ENCODE measurements at regions of chr4 and their contacts with region 1.

Region 1: DNA sequence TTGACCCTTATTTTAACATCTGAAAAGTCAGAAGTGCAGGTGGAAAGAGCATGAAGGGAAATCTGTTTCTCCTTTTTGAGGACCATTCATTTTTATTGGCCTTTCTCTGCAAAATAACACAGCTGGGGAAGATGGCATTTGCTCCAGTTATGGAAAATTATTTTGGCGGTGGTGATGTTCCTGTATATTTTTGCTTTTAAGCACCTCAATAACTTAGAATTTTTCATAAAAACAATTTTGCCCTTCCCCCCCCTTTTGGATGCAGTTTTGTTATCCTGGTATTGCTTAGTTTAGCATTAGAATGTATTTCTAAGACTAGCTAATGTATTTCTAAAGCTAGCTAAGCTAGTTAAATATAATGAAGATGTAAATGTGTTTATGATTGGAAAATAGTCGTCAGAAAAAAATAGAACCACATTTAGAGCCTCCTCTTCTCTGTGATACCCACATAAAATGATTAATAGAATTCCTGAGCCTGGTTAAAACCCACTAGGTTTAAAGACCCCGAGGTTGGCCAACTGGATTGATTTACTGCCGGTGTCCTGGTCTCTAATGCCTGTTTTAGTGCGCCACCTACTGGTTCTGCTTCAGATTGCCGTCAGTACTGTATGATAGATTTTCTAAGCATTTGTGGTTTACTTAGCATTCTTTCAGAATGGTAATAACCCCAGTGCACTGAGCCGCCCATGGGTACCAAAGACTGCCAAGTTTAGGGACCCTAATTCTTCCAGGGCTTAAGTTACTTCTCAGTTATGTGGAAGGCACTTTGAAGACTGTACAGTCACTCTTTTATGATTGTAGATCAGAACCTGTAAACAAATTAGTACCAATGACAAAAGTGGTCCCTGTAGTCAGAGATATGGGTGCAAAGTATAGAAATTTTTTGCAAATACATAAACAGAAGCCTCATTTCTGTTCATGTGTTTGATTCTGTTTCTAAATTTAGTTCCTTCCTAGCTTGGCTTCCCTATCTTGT is 11.4 kb downstream of the KLF3 start:
- DNase-seq: peak; percentile 95
- H3K4me3 Mint-ChIP-seq: peak overlapping the region; percentile 71
- H3K27ac Mint-ChIP-seq: peak overlapping the region; percentile 82
- H3K4me1 Mint-ChIP-seq: peaks cover 85% of the 10 kb centered on the region
- H3K27me3 Mint-ChIP-seq: no peaks in the 10 kb centered on the region

Region 2: DNA sequence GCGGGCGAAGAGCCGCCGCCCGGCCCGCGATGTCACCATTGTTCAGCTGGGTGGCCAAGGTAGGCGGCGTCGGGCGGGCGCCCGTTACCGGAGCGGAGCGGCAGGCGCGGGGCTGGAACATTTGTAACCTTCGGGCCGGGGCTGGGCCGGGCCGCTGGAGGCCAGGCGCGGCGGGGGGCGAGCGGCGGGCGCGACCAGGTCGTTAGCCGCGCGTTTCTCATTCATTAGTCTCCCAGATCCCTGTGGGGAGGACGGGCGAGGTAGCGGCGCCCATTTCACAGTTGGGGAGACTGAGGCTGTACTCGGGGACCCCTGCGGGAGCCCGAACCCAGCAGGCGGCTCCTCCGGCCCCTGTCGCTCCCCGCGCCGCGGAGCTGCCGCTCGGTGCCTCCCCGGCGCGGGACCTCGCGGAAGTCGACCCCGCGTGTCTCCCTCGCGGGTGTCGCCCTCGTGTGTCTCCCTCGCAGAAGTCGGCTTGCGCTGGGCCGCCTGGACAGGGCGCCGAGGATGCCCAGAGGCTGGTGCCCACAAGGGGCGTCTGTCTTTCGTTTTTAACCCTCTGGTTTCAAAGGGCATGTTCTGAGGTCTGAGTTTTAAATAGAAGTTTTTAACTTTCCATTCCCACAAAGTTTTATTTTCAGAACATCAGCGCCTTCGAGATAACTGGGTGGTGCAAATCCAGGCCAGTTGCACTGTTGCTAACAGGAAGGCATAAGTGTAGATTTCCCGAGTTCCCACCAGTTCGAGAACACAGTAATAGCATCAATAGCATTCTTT is 697.8 kb before region 1 on chr4:
- CTCF ChIA-PET with region 1: no interaction called
- intact Hi-C with region 1: loop called (anchors 5 kb)
- DNase-seq: peak; percentile 83
- H3K4me3 Mint-ChIP-seq: peak overlapping the region; percentile 77
- H3K27ac Mint-ChIP-seq: peak overlapping the region; percentile 26
- H3K4me1 Mint-ChIP-seq: peaks cover 27% of the 10 kb centered on the region
- H3K27me3 Mint-ChIP-seq: no peaks in the 10 kb centered on the region

Region 3: DNA sequence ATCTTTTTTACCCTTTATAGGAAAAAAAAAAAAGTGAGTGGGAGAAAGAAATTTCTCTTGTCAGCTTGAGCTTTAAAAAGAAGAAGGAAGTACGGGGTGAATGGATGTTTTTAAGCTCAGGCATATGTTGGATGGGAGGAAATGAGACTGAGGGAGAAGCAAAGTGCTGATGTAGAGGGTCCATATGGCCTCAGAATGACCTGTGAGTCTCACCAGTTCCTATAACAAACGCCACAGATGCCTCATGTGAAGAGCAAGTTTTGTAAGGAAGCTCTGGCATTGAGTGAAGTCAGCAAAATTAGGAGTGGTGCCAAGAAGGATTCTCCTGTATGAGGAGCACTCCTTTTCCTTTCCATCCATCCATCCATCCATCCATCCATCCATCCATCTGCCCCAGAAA is 500.6 kb before region 1 on chr4:
- CTCF ChIA-PET with region 1: interaction called, 101 read pairs
- intact Hi-C with region 1: loop called (anchors 1 kb)
- DNase-seq: no peak
- H3K4me3 Mint-ChIP-seq: no peak overlapping the region
- H3K27ac Mint-ChIP-seq: peak overlapping the region; percentile 14
- H3K4me1 Mint-ChIP-seq: peaks cover 42% of the 10 kb centered on the region
- H3K27me3 Mint-ChIP-seq: no peaks in the 10 kb centered on the region

Region 4: DNA sequence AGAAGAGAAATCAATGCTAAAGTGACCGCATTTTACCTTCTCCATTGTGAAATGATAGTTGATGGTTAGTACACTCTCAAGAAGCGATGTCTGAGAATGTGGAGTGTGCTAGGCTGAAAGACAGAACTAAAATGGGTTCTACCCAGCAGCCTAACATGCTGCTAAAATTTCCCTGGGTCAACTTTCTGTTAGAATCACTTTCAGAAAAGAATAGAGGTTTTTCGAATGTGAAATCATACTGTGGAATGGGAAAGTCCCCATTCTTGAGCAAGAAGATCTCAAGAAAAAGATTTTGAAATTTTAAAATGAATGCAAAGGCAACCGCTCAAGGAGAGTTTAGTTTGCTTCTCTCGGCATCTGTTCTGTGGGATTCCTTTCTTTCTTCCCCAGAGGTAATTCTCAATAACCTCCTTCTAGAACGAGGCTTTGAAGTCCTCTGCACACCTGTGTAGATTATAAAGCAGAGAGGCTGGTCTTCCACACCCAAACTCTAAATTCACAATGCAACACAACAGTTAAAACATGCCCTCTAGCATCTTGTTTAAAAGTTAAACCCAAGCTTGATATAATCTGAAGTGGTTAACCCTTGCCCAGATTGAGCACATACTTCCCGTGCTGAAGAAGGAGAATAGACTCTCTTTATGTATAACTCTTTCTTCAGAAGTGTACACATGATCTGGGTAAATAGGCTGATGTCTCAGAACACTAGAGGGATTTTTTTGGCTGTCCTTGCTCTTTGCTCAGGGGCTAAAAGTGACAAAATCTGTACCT is 220.2 kb before region 1 on chr4:
- CTCF ChIA-PET with region 1: no interaction called
- intact Hi-C with region 1: loop called (anchors 10 kb)
- DNase-seq: peak; percentile 11
- H3K4me3 Mint-ChIP-seq: no peak overlapping the region
- H3K27ac Mint-ChIP-seq: peak overlapping the region; percentile 82
- H3K4me1 Mint-ChIP-seq: peaks cover 52% of the 10 kb centered on the region
- H3K27me3 Mint-ChIP-seq: no peaks in the 10 kb centered on the region

Region 5: GRCh38 chr4:38687571-38688011 is 12.2 kb after region 1 on chr4:
- CTCF ChIA-PET with region 1: interaction called, 10 read pairs
- intact Hi-C with region 1: no loop called
- DNase-seq: peak; percentile 50
- H3K4me3 Mint-ChIP-seq: no peak overlapping the region
- H3K27ac Mint-ChIP-seq: peak overlapping the region; percentile 78
- H3K4me1 Mint-ChIP-seq: peaks cover 62% of the 10 kb centered on the region
- H3K27me3 Mint-ChIP-seq: no peaks in the 10 kb centered on the region

Region 6: GRCh38 chr4:38837849-38838248 is 162.4 kb after region 1 on chr4:
- CTCF ChIA-PET with region 1: no interaction called
- intact Hi-C with region 1: no loop called
- DNase-seq: no peak
- H3K4me3 Mint-ChIP-seq: no peak overlapping the region
- H3K27ac Mint-ChIP-seq: peak overlapping the region; percentile 43
- H3K4me1 Mint-ChIP-seq: peaks cover 23% of the 10 kb centered on the region
- H3K27me3 Mint-ChIP-seq: no peaks in the 10 kb centered on the region

Region 7: DNA sequence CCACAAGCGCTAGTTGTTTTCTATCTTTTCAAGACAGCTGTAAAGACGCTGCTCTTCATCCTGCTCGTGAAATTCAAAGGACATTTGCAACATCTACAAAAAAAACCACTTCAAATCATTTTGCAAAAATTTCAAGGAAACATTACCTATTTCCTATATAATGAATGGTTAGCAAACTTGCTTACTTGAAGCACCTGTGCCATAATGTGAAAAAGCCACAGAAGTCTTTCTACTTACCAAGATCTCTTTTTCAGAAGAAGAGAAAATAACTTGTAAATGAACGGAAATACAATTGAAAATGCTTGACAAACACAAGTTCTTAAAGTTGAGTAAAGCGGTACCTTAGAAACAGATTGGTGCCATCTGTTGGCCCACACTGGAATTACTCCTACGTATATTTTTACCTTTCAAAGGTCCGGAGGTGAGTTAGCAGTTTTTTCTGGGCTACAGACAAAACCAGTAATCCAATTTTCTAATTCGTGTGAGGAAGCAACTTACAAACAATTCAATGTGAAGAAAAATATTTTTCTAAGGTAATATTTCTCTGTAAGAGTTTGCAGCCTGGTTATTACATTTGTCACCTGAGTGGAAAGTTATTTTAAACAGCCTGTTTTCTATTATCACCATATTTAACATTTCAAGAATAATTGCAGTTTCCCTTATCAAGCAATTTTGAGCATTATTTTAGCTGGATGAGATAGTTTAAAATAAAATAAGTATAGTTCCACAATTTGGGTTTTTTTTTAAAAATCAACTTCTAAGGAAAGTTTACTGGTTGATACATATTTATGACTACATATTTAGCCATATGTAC is 181.3 kb after region 1 on chr4 and contains the start of gene TLR6:
- CTCF ChIA-PET with region 1: no interaction called
- intact Hi-C with region 1: loop called (anchors 5 kb)
- DNase-seq: peak; percentile 86
- H3K4me3 Mint-ChIP-seq: peak within 1 kb of the TSS; percentile 66
- H3K27ac Mint-ChIP-seq: peak within 1 kb of the TSS; percentile 84
- H3K4me1 Mint-ChIP-seq: peaks cover 35% of the 10 kb centered on the region
- H3K27me3 Mint-ChIP-seq: no peaks in the 10 kb centered on the region
- total RNA-seq, gene TLR6: 3.6 TPM